ENCODE measurements at regions of chr1 and their contacts with region 1.

Region 1: GRCh38 chr1:160098852-160099561 is 588 bp upstream of the IGSF8 start:
- DNase-seq: peak; percentile 98 to 100 (median 99)
- ATAC-seq: peak; percentile 92
- H3K4me3 ChIP-seq: peak overlapping the region; percentile 69
- H3K27ac ChIP-seq: peak overlapping the region; percentile 92
- H3K4me1 ChIP-seq: peaks cover 2% of the 10 kb centered on the region
- H3K27me3 ChIP-seq: no peaks in the 10 kb centered on the region

Region 2: DNA sequence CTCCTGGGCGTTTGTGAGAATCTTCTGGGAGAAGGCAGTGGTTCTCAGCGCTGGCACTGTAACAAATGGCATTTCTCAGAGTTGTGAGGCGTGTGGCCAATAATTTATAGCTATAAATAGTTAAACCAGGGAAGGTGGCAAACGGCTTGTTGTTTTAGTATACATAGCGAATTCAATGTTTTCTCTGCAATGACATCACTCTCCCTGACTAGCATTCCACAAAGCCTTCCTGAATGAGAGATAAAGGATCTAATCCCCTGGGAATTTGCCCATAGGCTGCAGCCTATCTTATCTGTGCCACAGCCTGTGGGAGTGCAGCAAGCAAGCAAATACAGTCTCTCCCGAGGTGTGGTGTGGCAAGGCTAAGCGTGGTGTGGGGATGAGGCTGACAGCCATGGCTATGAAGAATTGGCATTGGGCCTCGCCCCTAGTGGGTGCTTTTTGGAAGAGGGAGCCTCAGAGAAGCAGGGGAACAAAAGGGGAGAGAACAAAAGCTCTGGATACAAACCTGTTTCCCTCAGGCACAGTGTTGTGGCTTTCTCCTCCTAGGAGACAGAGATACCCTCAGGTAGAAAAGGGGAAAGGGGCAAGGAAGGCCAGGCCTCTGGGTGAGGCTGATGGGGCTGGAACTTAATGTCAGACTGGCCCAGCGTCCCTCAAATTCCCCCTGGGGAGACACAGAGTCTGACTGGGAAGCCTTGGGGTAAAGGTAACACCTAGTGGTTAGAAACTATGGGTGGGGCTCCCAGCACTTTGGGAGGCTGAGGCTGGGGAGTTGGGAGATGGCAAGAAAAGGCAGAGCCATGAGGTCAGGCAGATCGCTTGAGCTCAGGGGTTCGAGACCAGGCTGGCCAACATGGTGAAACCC is 182.6 kb before region 1 on chr1:
- intact Hi-C with region 1: no loop called
- DNase-seq: peak in 2 of 3 donors; percentile 62 to 69
- ATAC-seq: peak; percentile 57 to 70
- H3K4me3 ChIP-seq: no peak overlapping the region
- H3K27ac ChIP-seq: peak overlapping the region; percentile 65
- H3K4me1 ChIP-seq: peaks cover 20% of the 10 kb centered on the region
- H3K27me3 ChIP-seq: no peaks in the 10 kb centered on the region

Region 3: DNA sequence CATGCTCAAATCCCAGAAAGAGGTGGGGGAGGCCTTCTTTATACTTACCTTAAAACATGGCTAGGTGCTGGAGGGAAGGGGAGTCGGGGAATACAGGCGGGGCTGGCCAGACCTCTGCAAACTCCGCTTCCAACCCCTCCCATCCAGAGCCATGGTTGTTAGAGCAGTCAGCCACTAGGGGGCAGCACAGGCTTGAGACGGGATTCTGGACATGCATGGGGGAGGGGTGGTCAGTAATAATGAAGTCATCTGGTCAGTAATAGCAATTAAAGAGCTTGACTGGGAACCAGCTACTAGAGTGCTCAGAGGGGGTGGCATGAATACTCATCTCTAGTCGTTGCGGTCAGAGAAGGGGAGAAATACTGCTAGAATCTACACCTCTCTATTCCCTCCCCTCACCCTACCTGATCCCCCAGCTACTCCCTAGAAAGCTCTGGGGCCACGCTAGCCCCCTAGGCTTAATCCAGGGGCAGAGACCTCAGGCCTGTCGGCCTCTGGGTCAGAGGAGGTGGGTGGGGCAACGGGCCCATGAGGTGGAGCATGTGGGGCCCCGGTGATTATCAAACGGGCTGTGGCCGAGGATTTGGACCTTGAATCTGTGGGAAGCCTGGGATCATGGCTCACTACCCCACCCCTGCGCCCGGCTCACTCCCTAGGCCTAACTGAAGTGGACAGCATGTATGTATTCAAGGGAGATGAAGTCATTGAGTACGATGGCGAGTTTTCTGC is 94.2 kb after region 1 on chr1:
- intact Hi-C with region 1: loop called in 1 of 4 experiments (anchors 5 kb)
- DNase-seq: peak; percentile 86 to 93 (median 92)
- ATAC-seq: peak; percentile 85 to 86
- H3K4me3 ChIP-seq: no peak overlapping the region
- H3K27ac ChIP-seq: peak overlapping the region; percentile 4
- H3K4me1 ChIP-seq: peaks cover 9% of the 10 kb centered on the region
- H3K27me3 ChIP-seq: no peaks in the 10 kb centered on the region

Region 4: GRCh38 chr1:160219062-160219929 is 120.3 kb after region 1 on chr1:
- intact Hi-C with region 1: loop called in 2 of 4 experiments (anchors 5 to 10 kb)
- DNase-seq: peak; percentile 44 to 69 (median 66)
- ATAC-seq: peak; percentile 73 to 80
- H3K4me3 ChIP-seq: no peak overlapping the region
- H3K27ac ChIP-seq: peak overlapping the region; percentile 24
- H3K4me1 ChIP-seq: peaks cover 8% of the 10 kb centered on the region
- H3K27me3 ChIP-seq: no peaks in the 10 kb centered on the region

Region 5: GRCh38 chr1:160251687-160252526 is 152.9 kb after region 1 on chr1:
- intact Hi-C with region 1: loop called in 2 of 4 experiments (anchors 5 kb)
- DNase-seq: peak in 2 of 3 donors; percentile 70 to 83
- ATAC-seq: peak; percentile 92 to 93
- H3K4me3 ChIP-seq: no peak overlapping the region
- H3K27ac ChIP-seq: no peak overlapping the region
- H3K4me1 ChIP-seq: no peaks in the 10 kb centered on the region
- H3K27me3 ChIP-seq: no peaks in the 10 kb centered on the region

Region 6: GRCh38 chr1:160291248-160292220 is 192.5 kb after region 1 on chr1:
- intact Hi-C with region 1: loop called in 1 of 4 experiments (anchors 10 kb)
- DNase-seq: peak; percentile 35 to 73 (median 61)
- ATAC-seq: peak; percentile 77 to 79
- H3K4me3 ChIP-seq: no peak overlapping the region
- H3K27ac ChIP-seq: peak overlapping the region; percentile 43
- H3K4me1 ChIP-seq: no peaks in the 10 kb centered on the region
- H3K27me3 ChIP-seq: no peaks in the 10 kb centered on the region

Region 7: DNA sequence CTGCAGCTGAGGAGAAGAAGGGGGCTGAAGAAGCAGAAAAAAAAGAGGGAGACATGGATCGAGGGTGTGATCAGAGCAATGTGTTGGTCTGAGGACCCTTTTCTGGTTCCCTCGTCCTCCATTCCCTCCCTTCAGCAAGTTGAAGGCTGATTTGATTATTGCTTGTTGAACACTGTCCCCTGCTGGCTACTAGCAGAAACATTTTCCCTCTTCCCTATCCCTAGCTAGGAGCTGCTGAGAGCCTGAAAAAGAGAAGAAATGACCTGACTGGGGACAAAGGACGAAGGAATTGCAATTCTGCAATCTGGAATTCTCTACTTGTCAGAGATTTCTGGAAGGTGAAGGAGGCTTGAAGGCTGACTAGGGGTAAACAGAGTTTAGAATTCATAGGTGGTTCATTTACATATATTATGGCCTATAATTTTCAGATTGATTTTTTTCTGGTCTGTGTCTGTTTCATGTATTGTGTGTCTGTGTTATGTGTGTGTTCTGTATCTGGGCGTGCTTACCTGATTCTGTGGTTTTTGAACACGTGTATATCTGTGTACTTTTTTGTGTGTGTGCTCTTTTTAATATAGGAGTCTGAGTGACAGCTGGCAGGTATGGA is 277.6 kb after region 1 on chr1:
- intact Hi-C with region 1: loop called in 2 of 4 experiments (anchors 10 kb)
- DNase-seq: no peak
- ATAC-seq: peak; percentile 79 to 83
- H3K4me3 ChIP-seq: no peak overlapping the region
- H3K27ac ChIP-seq: no peak overlapping the region
- H3K4me1 ChIP-seq: peaks cover 7% of the 10 kb centered on the region
- H3K27me3 ChIP-seq: no peaks in the 10 kb centered on the region